Activated CD8-positive, alpha-beta T cell treated with anti-CD3 and anti-CD28 coated beads for 36 hours (primary cell): ENCODE measurements at regions of chr19 and their contacts with region 1.

Region 1: GRCh38 chr19:54029930-54030490 is 33.7 kb downstream of the VSTM1 start:
- DNase-seq: peak; percentile 71
- ATAC-seq: no peak
- H3K4me3 Mint-ChIP-seq: no peak overlapping the region
- H3K27ac Mint-ChIP-seq: no peak overlapping the region
- H3K4me1 Mint-ChIP-seq: no peaks in the 10 kb centered on the region
- H3K27me3 Mint-ChIP-seq: peaks cover 23% of the 10 kb centered on the region
- CTCF ChIP-seq: peak; percentile 58

Region 2: DNA sequence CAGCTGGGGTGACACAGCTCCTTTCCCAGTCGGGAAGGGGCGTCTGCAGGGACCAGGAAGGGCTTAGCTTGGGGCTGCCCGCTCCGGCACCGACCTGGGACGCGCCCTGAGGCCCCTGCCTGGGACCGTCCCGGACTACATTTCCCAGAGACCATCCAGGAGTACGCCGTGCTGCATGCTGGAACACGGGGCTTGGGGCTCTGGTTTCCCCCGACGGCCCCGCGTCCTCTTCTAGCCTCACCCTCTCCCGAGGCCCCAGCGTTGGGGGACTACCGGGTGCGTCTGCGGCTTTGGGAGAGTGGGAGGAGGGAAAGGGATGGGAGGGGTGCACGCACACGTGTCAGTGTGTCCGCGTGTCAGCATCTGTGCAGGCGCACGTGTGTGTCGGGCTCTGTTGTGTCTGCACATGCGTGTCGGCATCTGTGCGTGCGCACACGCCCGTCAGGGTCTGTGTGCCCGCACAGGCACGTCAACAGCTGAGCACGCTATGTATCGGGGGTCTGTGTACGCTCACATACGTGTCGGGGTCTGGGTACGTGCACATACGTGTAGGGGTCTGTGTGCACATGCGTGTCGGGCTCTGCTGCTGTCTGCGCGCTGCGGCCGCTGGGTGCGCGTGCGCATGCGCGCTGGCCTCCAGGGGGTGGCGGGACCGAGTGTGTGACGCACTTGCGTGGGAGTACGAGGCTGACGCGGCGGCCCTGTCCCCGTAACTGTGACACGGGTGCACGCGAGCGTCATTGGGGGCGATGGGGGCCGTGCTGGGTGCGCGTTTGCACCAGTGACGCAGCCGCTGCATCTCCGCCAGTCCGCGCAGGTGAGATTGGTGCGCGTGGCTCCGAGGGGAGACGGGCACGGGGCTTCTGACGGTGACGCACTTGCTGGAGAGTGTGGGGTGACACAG is 492.3 kb before region 1 on chr19 and contains the start of gene ZNF331:
- CTCF ChIA-PET with region 1: no interaction called
- POLR2A ChIA-PET with region 1: no interaction called
- intact Hi-C with region 1: no loop called
- DNase-seq: peak; percentile 91
- ATAC-seq: peak; percentile 78
- H3K4me3 Mint-ChIP-seq: peak within 1 kb of the TSS; percentile 94
- H3K27ac Mint-ChIP-seq: peak within 1 kb of the TSS; percentile 98
- H3K4me1 Mint-ChIP-seq: peaks cover 20% of the 10 kb centered on the region
- H3K27me3 Mint-ChIP-seq: no peaks in the 10 kb centered on the region
- CTCF ChIP-seq: no peak
- total RNA-seq, gene ZNF331: 34.8 to 36.4 TPM

Region 3: GRCh38 chr19:53942001-53942786 is 87.8 kb before region 1 on chr19:
- CTCF ChIA-PET with region 1: interaction called, 5 read pairs
- POLR2A ChIA-PET with region 1: no interaction called
- intact Hi-C with region 1: loop called (anchors 10 kb)
- DNase-seq: peak; percentile 45
- ATAC-seq: peak; percentile 66
- H3K4me3 Mint-ChIP-seq: no peak overlapping the region
- H3K27ac Mint-ChIP-seq: no peak overlapping the region
- H3K4me1 Mint-ChIP-seq: no peaks in the 10 kb centered on the region
- H3K27me3 Mint-ChIP-seq: peaks cover 35% of the 10 kb centered on the region
- CTCF ChIP-seq: no peak

Region 4: DNA sequence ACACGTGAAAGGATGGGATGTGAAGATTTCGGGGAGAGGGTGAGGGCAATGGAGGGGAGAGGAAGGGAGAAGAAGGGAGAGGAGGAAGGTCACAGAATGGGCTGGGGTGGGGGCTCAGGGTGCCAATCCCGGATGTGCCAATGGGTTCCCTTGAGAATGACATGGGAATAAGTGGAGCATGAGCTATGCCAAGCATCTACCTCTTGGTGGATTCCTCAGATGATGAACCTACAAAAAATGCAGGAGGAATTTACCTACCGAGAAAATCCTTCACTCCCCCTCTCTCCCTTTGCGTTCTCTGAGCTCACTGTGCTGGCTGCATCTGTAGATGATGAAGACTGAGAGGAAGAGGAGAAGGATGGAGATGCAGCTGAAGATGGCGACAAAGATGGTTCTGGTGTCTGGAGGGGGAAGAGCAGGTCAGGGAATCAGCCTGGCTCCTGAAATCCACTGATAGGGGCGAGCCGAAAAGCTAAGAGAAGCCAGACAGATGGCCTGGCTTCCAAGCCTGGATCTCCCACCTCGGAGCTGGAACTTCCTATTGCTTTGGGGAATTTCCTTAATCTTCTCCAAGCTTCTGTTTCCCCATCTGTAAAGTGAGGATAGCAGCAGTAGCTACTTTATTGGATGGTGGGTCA is 12.1 kb after region 1 on chr19:
- CTCF ChIA-PET with region 1: interaction called, 20 read pairs
- POLR2A ChIA-PET with region 1: no interaction called
- intact Hi-C with region 1: no loop called
- DNase-seq: no peak
- ATAC-seq: no peak
- H3K4me3 Mint-ChIP-seq: no peak overlapping the region
- H3K27ac Mint-ChIP-seq: no peak overlapping the region
- H3K4me1 Mint-ChIP-seq: no peaks in the 10 kb centered on the region
- H3K27me3 Mint-ChIP-seq: peaks cover 6% of the 10 kb centered on the region
- CTCF ChIP-seq: no peak

Region 5: DNA sequence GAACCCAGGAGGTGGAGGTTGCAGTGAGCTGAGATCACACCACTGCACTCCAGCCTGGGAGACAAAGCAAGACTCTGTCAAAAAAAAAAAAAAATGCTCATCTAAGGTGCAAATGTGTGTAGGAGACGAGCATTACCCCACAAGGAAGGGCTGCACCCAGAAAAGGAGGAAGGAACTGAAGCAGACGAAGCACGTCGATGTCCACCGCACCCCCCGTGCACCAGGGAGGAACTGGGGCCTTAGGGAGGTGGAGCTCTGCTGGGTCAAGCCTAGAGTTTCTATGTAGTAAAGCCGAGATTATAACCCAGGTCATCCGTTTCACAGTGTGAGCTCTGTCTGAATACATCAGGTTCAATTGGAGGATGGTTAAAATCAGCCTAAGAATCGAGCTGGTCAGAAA is 32.6 kb after region 1 on chr19:
- CTCF ChIA-PET with region 1: no interaction called
- POLR2A ChIA-PET with region 1: no interaction called
- intact Hi-C with region 1: no loop called
- DNase-seq: no peak
- ATAC-seq: no peak
- H3K4me3 Mint-ChIP-seq: no peak overlapping the region
- H3K27ac Mint-ChIP-seq: no peak overlapping the region
- H3K4me1 Mint-ChIP-seq: no peaks in the 10 kb centered on the region
- H3K27me3 Mint-ChIP-seq: peaks cover 14% of the 10 kb centered on the region
- CTCF ChIP-seq: no peak

Region 6: GRCh38 chr19:54096617-54097129 is 66.7 kb after region 1 on chr19:
- CTCF ChIA-PET with region 1: no interaction called
- POLR2A ChIA-PET with region 1: no interaction called
- intact Hi-C with region 1: no loop called
- DNase-seq: no peak
- ATAC-seq: peak; percentile 60
- H3K4me3 Mint-ChIP-seq: peak overlapping the region; percentile 50
- H3K27ac Mint-ChIP-seq: peak overlapping the region; percentile 46
- H3K4me1 Mint-ChIP-seq: peaks cover 7% of the 10 kb centered on the region
- H3K27me3 Mint-ChIP-seq: peaks cover 21% of the 10 kb centered on the region
- CTCF ChIP-seq: no peak

Region 7: DNA sequence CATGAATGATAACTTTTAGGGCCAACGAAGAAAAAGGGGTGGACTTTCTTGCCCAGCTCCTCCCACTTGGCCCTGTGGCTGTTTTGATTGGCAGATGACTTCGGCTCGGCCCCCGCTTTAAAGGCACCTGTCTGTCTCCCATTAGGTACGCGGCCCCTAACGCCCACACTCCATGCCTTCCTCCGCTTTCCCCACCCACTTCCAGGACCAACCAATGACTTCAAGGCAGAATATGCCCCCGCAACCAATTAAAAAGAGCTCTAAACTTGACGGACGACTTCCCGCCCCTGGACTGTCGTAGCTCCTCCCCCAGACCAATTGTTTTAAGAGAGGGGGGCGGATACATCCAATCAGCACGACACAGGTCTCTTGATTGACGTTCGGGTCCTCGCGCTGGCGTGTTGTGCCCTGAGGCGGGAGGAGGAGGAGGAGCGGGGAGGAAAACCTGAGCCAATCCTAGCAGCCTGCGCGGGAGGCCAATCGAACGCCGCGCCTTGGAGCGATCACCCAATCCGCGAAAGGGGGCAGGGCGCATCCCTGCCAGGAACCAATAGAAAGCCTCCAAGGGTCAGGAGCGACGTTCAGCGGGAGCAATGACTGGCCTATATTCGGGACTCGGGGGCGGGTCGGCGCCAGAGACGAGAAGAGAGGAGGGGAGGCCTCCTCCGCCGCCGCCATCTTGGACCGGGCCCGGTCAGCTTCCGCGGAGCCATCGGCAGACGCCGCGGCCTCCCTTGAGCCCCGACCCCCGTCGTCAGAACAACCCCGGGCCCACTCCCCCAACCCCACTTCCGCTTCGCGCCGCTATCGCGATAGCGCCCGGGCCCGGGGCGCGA is 107.3 kb after region 1 on chr19 and contains the start of gene CNOT3:
- CTCF ChIA-PET with region 1: no interaction called
- POLR2A ChIA-PET with region 1: no interaction called
- intact Hi-C with region 1: no loop called
- DNase-seq: peak; percentile 100
- ATAC-seq: peak; percentile 85
- H3K4me3 Mint-ChIP-seq: peak within 1 kb of the TSS; percentile 87
- H3K27ac Mint-ChIP-seq: peak within 1 kb of the TSS; percentile 92
- H3K4me1 Mint-ChIP-seq: peaks cover 47% of the 10 kb centered on the region
- H3K27me3 Mint-ChIP-seq: no peaks in the 10 kb centered on the region
- CTCF ChIP-seq: no peak
- total RNA-seq, gene CNOT3: 48.8 to 50.7 TPM